HAP-1 (cell line): ENCODE measurements at regions of chr19 and their contacts with region 1.

Region 1: DNA sequence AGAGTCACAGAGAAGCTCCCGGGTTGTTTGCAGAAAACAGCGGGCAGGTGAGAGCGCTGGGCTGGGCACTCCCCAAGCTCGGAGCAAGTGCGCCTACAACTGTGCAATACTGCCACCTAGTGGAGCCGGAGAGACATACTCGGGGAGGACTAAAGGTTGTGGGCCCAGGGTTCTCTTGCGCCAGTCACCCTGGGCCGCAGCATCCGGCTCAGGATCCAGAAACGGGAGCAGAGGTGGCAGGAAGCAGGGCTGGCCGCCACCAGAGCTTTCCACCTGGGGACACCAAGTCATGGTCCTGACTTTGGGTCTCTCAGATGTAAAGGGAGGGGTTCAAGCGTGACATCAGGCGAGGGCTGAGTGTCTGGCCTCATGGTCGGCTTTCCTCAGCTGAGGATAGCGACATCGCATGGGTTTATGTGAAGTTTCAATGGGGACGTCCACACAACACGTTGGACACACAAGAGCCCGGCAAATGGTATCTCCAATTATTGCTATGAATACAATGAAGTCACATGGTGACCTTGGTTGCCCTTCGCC is 11.2 kb upstream of the KLK4 start:
- DNase-seq: peak; percentile 64 to 84
- H3K4me3 ChIP-seq: no peak overlapping the region
- H3K4me1 ChIP-seq: no peaks in the 10 kb centered on the region
- H3K27me3 ChIP-seq: no peaks in the 10 kb centered on the region; the same call in 1 of the 2 replicates

Region 2: DNA sequence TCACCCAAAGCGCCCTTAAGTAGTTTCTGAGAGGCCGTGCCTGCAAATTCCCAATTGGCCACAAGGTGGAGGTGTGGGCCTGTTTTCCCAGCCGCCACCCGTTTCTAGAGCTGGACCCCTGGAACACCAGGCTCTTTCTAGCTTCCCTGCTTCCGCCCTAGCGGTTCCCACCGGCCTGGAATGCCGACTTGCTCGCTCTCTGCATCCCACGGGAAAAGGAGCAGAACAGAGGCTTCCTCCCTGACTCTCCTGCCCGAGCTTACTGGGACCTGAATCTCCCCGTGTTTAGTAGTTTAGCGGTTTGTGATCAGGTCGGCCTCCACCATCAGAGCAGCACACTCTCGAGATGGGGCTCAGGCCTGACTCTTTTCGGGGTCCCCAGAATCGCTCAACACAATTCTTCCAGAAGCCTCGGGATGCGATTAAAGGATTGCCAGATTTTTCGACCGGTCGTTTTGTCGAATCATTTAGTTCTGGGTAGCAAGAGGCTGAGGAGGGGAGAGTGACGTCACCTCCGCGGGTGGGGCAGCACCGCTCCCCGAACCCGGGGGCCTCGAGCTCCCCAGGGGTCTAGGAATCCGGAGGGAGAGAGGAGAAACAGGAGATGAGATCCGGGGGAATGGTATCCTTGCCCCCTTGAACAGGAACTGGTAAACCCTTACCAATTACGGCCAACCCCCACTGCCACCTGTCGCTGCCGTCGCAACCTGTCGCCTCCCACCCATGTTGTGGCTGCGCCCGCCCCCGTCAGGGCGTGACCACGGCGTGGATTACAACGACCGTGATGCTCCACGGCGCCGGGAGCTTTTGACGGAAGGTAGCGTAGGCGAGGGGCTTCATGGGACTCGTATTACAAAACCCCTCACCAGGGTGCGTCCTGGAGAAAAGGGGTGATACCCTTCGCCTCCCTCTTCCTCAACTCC is 564.9 kb before region 1 on chr19:
- in situ Hi-C with region 1: loop called (anchors 25 kb)
- DNase-seq: peak; percentile 68 to 83
- H3K4me3 ChIP-seq: no peak overlapping the region
- H3K4me1 ChIP-seq: no peaks in the 10 kb centered on the region; the same call in 1 of the 2 replicates
- H3K27me3 ChIP-seq: peaks cover 3% of the 10 kb centered on the region; the same call in 1 of the 2 replicates